ENCODE measurements at regions of chr3 and their contacts with region 1.

Region 1: DNA sequence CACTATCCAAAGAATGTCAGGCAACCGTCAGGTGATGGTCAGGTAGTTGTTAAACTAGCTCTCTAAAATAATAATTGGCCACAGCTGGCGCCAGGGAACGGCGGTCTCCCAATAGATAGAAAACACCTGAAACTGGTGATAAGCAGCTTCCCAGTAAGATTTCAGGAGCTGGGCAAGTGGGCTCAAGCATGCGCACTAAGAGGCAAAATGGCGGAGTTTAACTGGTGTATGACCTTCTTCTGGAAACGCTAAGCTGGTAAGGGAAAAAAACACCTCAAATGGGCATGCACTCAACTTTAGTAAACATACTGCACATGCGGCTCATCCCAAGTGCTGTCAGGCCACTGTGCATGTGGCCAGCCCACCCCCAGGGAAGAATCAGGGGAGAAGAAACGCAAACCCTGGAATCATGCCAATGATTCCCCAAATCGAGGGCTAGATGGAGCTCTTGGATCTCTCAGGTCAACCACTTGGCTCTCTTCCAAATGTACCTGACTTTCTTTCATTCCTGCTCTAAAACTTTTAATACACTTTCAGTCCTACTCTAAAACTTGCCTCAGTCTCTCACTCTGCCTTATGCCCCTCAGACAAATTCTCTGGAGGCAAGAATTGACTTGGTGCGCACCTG is 195.0 kb downstream of the ZNF621 start:
- DNase-seq: no peak
- ATAC-seq: no peak
- H3K4me3 ChIP-seq: no peak overlapping the region
- H3K27ac ChIP-seq: no peak overlapping the region
- H3K4me1 ChIP-seq: no peaks in the 10 kb centered on the region
- H3K27me3 ChIP-seq: no peaks in the 10 kb centered on the region
- CTCF ChIP-seq: peak in 3 of 5 experiments; percentile 27 to 53 (median 39)
- POLR2A ChIP-seq: no peak

Region 2: DNA sequence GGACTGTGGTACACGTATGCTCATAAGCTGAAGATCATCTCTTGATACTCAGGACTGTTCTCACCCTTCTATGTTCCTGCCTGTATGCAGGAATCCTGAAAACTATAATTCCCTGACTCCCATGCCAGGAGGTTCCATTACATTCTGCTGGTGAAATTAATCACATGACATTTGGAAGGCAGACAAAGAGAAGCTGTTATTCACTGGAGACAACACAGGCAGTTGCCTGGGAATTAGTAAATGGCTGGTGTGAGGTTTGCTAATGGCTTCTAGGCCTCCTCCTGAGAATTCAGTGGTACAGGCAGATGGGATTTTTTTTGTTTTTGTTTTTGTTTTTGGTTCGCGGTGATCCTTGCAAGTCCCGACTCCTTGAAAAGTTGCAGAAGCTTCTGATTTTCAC is 571.0 kb after region 1 on chr3:
- in situ Hi-C with region 1: no loop called
- intact Hi-C with region 1: loop called (anchors 10 kb)
- DNase-seq: no peak
- ATAC-seq: no peak
- H3K4me3 ChIP-seq: no peak overlapping the region
- H3K27ac ChIP-seq: no peak overlapping the region
- H3K4me1 ChIP-seq: peaks cover 0 to 7% of the 10 kb centered on the region in 2 donors
- H3K27me3 ChIP-seq: no peaks in the 10 kb centered on the region
- CTCF ChIP-seq: no peak
- POLR2A ChIP-seq: no peak